Dendritic cell treated with granulocyte-macrophage colony-stimulating factor and Interleukin-4, amounts not matched to agents 40 ng/mL and 50 ng/mL, for 4 days (primary cell): ENCODE measurements at regions of chr20 and their contacts with region 1.

Region 1: GRCh38 chr20:11159728-11160127 is 485.9 kb upstream of the JAG1 start:
- H3K4me3 Mint-ChIP-seq: peak overlapping the region; percentile 57
- H3K27ac Mint-ChIP-seq: peak overlapping the region; percentile 86
- H3K4me1 Mint-ChIP-seq: peaks cover 40% of the 10 kb centered on the region
- H3K27me3 Mint-ChIP-seq: peaks cover 7% of the 10 kb centered on the region

Region 2: GRCh38 chr20:10581823-10582222 is 577.9 kb before region 1 on chr20:
- intact Hi-C with region 1: no loop called
- H3K4me3 Mint-ChIP-seq: no peak overlapping the region
- H3K27ac Mint-ChIP-seq: no peak overlapping the region
- H3K4me1 Mint-ChIP-seq: peaks cover 27% of the 10 kb centered on the region
- H3K27me3 Mint-ChIP-seq: no peaks in the 10 kb centered on the region

Region 3: DNA sequence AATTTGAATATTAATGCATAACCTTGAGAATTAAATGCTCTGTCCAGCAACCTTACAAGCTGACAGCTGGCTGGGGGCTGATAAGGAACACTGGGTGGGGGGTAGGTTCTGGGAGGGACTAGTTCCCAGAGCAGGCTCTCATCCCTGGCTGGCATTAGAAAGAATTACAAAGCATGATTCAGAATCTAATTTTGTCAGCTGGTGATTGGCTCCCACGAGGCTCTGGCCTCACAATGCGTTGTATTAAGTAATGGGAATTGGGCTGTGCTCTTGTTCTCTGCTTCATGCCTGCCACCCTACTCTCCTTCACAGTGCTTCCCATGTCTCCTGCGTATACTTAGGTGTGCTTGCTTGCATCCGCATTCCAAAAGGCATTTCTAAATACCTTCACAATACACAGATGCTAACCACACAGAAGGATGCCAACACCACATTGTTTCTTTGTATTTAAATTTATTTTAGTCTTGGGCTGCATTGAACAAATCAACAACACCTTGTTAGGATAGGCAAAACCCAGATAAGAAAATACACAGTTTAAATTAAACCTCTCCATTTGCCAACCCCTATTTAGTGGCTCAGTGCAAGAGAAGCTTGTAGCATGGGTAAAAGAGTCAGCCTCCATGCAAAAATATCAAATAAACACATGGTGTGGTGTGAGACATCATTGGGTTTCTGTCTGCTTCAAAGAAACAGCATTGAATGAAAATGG is 51.5 kb before region 1 on chr20:
- intact Hi-C with region 1: loop called (anchors 10 kb)
- H3K4me3 Mint-ChIP-seq: no peak overlapping the region
- H3K27ac Mint-ChIP-seq: no peak overlapping the region
- H3K4me1 Mint-ChIP-seq: peaks cover 1% of the 10 kb centered on the region
- H3K27me3 Mint-ChIP-seq: no peaks in the 10 kb centered on the region

Region 4: DNA sequence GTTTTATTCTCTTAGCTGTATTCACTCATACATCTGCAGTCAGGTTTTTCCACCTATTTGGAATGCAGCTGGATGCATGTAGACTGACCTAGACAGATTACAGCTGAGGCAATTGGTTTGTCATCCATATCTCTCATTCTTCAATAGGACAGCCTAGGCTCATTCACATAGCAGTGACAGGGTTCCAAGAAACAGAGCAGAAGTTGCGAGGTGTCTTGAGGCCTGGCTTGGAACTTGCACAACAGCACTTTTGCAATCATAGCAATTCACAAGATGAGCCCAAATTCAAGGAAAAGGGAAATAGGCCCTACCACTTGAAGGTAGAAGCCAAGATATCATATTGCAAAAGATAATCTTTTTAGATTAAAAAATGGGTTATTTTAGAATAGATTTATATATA is 23.0 kb after region 1 on chr20:
- intact Hi-C with region 1: loop called (anchors 2 kb)
- H3K4me3 Mint-ChIP-seq: no peak overlapping the region
- H3K27ac Mint-ChIP-seq: peak overlapping the region; percentile 63
- H3K4me1 Mint-ChIP-seq: peaks cover 6% of the 10 kb centered on the region
- H3K27me3 Mint-ChIP-seq: no peaks in the 10 kb centered on the region